ENCODE measurements at regions of chr6 and their contacts with region 1.

Region 1: GRCh38 chr6:85490431-85491253 is 40.8 kb downstream of the NT5E start:
- DNase-seq: no peak
- ATAC-seq: no peak
- H3K4me3 Mint-ChIP-seq: no peak overlapping the region
- H3K27ac Mint-ChIP-seq: no peak overlapping the region
- H3K4me1 Mint-ChIP-seq: no peaks in the 10 kb centered on the region
- H3K27me3 Mint-ChIP-seq: no peaks in the 10 kb centered on the region
- CTCF ChIP-seq: no peak

Region 2: DNA sequence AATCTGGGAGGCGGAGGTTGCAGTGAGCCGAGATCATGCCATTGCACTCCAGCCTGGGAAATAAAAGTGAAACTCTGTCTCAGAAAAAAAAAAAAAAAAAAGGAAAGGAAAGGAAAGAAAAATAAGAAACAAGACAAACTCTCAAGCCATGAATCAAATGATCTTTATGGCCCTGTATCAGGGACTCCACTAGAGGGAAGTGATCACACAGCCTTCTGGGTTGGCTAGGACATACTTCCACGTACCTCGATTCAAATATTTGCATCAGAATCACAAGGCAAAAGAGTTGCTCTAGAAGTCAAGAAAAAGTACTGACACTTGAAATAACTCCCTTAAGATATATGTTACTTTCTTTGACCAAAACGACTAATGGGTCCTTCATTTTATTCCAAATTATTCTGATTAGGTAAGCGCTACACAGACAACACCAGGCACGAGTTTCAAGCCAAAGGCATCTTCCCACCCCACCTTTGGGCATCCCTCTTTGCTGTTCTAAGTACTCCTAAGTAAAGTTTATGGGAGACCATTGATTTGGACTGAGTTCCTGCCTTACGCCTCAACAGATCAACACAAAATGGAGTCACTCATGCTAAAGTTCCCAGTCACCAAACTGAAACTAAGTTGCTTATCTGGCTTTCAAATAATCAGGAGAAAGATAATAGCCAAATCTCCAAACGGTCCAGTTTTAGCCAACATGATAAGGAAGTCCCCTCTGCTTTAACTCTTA is 118.3 kb before region 1 on chr6:
- CTCF ChIA-PET with region 1: no interaction called
- POLR2A ChIA-PET with region 1: interaction called, 12 read pairs
- intact Hi-C with region 1: no loop called
- DNase-seq: no peak
- ATAC-seq: no peak
- H3K4me3 Mint-ChIP-seq: no peak overlapping the region
- H3K27ac Mint-ChIP-seq: no peak overlapping the region
- H3K4me1 Mint-ChIP-seq: no peaks in the 10 kb centered on the region
- H3K27me3 Mint-ChIP-seq: no peaks in the 10 kb centered on the region
- CTCF ChIP-seq: no peak

Region 3: DNA sequence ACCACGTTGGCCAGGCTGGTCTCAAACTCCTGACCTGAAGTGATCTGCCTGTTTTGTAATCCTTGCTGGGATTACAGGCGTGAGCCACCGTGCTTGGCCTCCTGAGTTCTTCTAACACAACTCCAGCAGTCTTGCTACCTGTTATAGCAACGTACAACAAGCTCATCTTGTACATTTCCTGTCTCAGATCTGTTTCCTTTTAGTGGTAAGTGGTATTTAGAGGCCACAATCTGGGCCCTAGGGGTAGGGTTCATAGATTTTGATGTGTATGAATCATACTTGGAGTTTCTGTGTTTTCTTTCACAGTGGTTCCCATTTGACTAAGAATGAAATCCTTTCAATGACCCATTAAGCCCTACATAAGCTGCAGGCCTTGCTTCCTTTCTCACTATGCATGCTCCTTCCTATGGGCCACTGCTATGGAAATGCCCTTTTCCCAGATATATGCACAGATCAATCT is 179.1 kb after region 1 on chr6:
- CTCF ChIA-PET with region 1: no interaction called
- POLR2A ChIA-PET with region 1: no interaction called
- intact Hi-C with region 1: no loop called
- DNase-seq: no peak
- ATAC-seq: peak; percentile 97
- H3K4me3 Mint-ChIP-seq: peak overlapping the region; percentile 75
- H3K27ac Mint-ChIP-seq: peak overlapping the region; percentile 95
- H3K4me1 Mint-ChIP-seq: peaks cover 50% of the 10 kb centered on the region
- H3K27me3 Mint-ChIP-seq: no peaks in the 10 kb centered on the region
- CTCF ChIP-seq: no peak